Astrocyte of the cerebellum (primary cell): ENCODE measurements at regions of chr5 and their contacts with region 1.

Region 1: DNA sequence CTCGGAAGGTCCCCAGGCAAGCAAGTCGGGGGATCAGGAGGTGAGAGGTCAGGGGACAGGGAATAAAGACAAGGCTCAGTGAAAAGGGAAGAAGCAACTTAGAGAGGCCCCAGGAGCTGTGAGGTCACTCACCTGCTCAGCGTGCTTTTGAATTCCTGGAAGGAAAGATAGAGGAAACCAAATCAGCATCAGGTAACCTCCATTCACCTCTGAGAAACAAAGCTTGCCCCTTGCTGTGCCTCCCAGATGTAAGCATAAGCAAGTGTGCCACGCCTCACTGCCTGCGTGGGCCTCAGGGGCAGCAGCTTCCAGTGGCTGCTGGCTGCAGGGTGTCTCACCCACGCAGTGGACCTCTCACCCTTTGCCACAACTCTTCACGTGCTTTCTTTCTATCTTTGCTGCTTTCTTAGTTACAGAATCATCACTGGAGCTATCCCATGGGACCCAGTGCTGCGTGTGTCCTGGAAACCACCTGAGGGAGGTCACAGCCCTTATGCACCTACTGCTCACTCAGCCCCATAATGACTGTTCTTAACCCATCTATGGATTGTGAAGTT is 6.0 kb downstream of the TRIM7 start:
- DNase-seq: no peak
- H3K4me3 ChIP-seq: no peak overlapping the region
- CTCF ChIP-seq: no peak

Region 2: GRCh38 chr5:181246276-181247050 is 47.4 kb after region 1 on chr5:
- in situ Hi-C with region 1: loop called (anchors 5 kb)
- DNase-seq: no peak
- H3K4me3 ChIP-seq: peak overlapping the region; percentile 64
- CTCF ChIP-seq: no peak